ENCODE measurements at regions of chr2 and their contacts with region 1.

Region 1: DNA sequence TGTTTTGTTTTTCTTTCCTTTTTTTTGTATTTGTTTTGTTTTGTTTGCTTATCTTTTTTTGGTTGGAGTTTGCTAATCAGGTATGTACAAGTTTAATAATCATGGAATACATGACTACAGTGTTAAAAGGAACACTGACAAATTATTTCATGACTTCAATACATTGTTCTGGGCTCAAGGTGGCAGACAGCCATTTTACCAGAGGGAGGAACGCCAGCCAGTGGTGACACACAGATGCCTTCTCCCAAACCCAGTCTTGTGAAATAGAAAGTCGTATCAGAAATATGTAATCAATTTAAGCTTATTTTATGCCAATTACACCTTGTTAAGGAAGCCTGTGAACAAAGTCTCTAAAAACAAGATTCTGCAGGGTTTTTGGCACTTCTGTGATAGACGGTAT is 264.0 kb upstream of the EPHA4 start:
- DNase-seq: peak; percentile 34
- ATAC-seq: 0 out of 2 replicates have a peak, but pooled peaks have one; percentile 43
- H3K4me3 ChIP-seq: no peak overlapping the region
- H3K27ac ChIP-seq: no peak overlapping the region
- H3K4me1 ChIP-seq: no peaks in the 10 kb centered on the region
- H3K27me3 ChIP-seq: peaks cover 23% of the 10 kb centered on the region; the same call in 1 of the 2 replicates
- CTCF ChIP-seq: 0 out of 2 replicates have a peak, but pooled peaks have one; percentile 18

Region 2: GRCh38 chr2:221857719-221858118 is 21.6 kb after region 1 on chr2:
- CTCF ChIA-PET with region 1: no interaction called
- POLR2A ChIA-PET with region 1: interaction called, 14 read pairs
- intact Hi-C with region 1: no loop called
- DNase-seq: no peak
- ATAC-seq: no peak
- H3K4me3 ChIP-seq: no peak overlapping the region
- H3K27ac ChIP-seq: no peak overlapping the region
- H3K4me1 ChIP-seq: no peaks in the 10 kb centered on the region
- H3K27me3 ChIP-seq: no peaks in the 10 kb centered on the region
- CTCF ChIP-seq: no peak

Region 3: GRCh38 chr2:221876016-221876415 is 39.9 kb after region 1 on chr2:
- CTCF ChIA-PET with region 1: no interaction called
- POLR2A ChIA-PET with region 1: interaction called, 20 read pairs
- intact Hi-C with region 1: no loop called
- DNase-seq: no peak
- ATAC-seq: no peak
- H3K4me3 ChIP-seq: no peak overlapping the region
- H3K27ac ChIP-seq: no peak overlapping the region
- H3K4me1 ChIP-seq: no peaks in the 10 kb centered on the region
- H3K27me3 ChIP-seq: no peaks in the 10 kb centered on the region
- CTCF ChIP-seq: no peak

Measured in PC-3 (cell line).